Activated CD8-positive, alpha-beta memory T cell treated with anti-CD3 and anti-CD28 coated beads, Interleukin-2, amount 10 ng/mL, durations not matched to agents 7 days and 5 days (primary cell): ENCODE measurements at regions of chr14 and their contacts with region 1.

Region 1: DNA sequence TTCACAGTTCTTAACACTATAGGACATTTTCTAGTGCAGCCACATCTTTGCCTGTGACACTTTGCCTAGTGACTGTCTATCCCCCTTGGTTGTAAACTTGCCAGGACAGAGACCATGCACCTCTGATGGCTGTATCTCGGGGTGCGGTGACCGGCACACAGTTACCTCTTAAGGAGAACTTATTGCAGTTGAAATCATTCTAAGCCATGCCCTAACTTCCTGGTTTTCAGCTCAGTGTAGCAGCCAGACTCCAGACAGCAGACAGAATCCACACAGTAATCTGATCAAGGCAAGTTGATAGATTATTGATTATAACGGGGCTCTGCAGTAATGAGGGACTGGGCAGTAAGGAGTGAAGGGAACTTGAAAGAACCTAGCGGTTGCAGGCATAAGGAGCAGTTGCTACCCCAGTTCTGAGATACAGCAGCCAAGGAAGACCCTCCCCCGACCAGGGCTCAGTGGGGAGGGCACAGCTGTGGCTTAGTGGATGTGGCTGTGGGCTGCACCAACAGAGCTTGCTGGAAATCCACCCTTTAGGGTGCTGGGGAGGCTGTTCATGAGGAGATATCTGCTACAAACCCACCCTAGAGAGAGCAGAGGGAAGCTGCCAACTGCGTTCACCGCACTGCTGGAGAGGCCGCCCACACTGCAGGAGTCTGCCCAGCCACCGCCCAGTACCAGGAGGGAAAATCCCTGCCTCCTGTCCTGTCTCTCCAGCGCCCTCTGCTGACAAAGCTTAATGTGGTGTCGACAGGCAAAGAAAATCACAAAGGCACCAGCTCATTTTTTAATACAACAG is 58.2 kb upstream of the BEGAIN start:
- DNase-seq: peak; percentile 94
- ATAC-seq: peak; percentile 82
- H3K4me3 Mint-ChIP-seq: peak overlapping the region; percentile 20
- H3K27ac Mint-ChIP-seq: peak overlapping the region; percentile 83
- H3K4me1 Mint-ChIP-seq: peaks cover 64% of the 10 kb centered on the region
- H3K27me3 Mint-ChIP-seq: peaks cover 9% of the 10 kb centered on the region

Region 2: DNA sequence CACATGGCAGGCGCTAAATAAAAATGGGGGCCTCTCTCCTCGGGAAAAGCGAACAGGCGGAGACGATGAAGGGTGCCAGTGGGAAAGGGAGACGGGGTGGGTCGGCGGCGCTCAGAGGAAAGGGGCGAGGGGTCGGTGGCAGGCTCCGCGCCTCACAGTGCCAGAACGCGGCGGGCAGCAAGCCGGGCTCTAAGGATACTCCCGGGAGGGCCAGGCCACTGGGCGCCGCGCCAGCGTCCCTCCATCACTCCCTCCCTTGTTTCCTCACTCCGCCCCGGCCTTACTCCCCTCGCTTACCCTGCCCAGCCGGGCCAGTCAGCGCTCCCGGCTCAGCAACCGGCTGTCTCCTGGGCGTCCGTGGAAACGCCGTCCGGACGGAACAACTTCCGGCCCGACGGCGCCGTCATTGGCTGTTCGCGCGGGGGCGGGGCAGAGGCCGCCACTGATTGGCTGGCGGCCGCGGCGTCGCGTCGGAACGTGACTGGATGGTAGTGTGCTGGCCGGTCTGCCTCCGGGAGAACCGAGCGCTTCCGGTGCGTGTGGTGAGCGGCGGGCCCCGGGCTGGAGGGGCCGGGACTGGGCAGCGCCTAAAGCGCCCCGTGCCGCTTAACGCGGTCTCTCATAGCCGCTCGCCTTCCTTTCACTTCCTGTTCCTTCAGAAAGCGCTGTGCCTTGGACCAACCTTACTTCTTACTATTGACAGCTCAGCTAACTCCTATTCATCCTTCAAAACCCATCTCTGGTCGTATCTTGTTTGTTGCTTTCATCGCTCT is 269.2 kb before region 1 on chr14:
- CTCF ChIA-PET with region 1: interaction called, 177 read pairs
- DNase-seq: peak; percentile 95
- ATAC-seq: peak; percentile 84
- H3K4me3 Mint-ChIP-seq: peak within 1 kb of the TSS; percentile 85
- H3K27ac Mint-ChIP-seq: peak within 1 kb of the TSS; percentile 92
- H3K4me1 Mint-ChIP-seq: peaks cover 49% of the 10 kb centered on the region
- H3K27me3 Mint-ChIP-seq: no peaks in the 10 kb centered on the region

Region 3: DNA sequence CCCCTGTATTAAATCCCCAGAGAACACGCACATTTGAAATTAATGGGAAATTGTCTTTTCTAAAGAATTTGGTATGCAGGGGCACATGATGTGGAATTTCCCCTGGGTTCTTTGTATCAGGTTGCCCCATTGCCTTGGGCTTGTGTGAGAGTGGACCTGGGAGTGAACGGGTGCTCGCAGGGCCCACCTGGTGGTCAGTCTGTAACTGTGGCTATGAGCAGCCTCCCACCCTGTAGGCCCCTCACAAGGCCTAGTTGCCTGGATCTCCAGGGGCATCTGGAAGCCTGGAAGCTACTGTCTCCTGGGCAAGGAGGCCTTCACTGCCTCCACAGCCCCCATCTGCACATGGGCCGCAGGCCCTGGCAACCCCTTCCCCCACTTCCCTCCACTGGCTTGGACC is 225.5 kb before region 1 on chr14:
- CTCF ChIA-PET with region 1: interaction called, 10 read pairs
- DNase-seq: no peak
- ATAC-seq: no peak
- H3K4me3 Mint-ChIP-seq: no peak overlapping the region
- H3K27ac Mint-ChIP-seq: no peak overlapping the region
- H3K4me1 Mint-ChIP-seq: peaks cover 4% of the 10 kb centered on the region
- H3K27me3 Mint-ChIP-seq: no peaks in the 10 kb centered on the region

Region 4: DNA sequence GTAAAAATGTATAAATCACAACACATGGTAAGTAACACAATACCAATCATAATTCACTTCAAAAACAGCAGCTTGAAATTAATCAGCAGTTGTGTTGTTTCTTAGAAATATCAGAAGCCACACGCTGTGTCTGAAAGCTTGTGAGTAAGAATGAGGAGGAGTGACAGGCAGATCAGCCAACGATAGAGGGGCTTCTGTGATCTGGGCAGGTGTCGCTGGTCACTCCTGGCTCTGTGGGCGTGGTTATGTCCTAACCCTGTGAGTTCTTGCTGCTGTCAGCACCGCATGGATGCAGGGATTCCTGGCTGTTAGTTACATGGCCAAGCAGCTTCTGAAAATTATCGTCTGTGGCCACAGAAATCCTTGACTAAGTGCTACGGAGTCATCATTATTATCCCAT is 198.8 kb before region 1 on chr14:
- CTCF ChIA-PET with region 1: interaction called, 45 read pairs
- DNase-seq: peak; percentile 56
- ATAC-seq: peak; percentile 75
- H3K4me3 Mint-ChIP-seq: no peak overlapping the region
- H3K27ac Mint-ChIP-seq: no peak overlapping the region
- H3K4me1 Mint-ChIP-seq: peaks cover 23% of the 10 kb centered on the region
- H3K27me3 Mint-ChIP-seq: no peaks in the 10 kb centered on the region

Region 5: DNA sequence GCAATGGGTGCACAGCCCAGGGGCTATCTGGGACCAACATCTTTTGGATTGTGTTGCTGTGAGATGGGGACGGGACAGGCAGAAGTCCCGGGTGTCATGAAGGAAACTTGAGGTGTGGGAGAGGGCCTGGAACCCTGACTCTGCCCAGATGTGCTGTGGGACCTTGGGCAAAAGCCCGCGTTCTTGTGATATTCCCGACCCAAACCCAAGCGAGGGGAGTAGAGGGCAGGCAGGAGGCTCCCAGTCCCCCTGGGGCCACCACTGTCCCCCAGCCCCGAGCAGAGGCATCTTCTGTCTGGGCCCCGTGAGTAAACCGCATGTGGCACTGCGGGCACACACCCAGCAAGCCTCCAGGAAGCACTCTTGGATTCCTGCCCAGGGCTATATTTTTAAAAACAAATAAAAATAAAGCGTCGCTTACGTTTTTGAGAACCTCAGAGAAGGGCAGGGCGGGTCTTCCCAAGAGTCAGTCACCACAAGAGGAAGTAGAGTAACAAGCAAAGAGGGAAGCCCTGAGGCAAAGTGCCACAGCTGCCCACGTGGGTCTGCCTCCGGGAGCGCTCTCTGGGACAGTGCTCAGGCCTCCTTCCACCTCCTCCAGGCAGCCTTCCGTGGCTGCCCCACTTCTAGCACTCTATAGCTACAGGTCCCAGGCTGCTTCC is 97.6 kb before region 1 on chr14:
- CTCF ChIA-PET with region 1: interaction called, 50 read pairs
- DNase-seq: peak; percentile 64
- ATAC-seq: peak; percentile 22
- H3K4me3 Mint-ChIP-seq: peak overlapping the region; percentile 20
- H3K27ac Mint-ChIP-seq: peak overlapping the region; percentile 84
- H3K4me1 Mint-ChIP-seq: peaks cover 35% of the 10 kb centered on the region
- H3K27me3 Mint-ChIP-seq: no peaks in the 10 kb centered on the region

Region 6: GRCh38 chr14:100626614-100627013 is 18.8 kb before region 1 on chr14:
- CTCF ChIA-PET with region 1: interaction called, 11 read pairs
- DNase-seq: no peak
- ATAC-seq: no peak
- H3K4me3 Mint-ChIP-seq: no peak overlapping the region
- H3K27ac Mint-ChIP-seq: no peak overlapping the region
- H3K4me1 Mint-ChIP-seq: peaks cover 7% of the 10 kb centered on the region
- H3K27me3 Mint-ChIP-seq: peaks cover 45% of the 10 kb centered on the region

Region 7: DNA sequence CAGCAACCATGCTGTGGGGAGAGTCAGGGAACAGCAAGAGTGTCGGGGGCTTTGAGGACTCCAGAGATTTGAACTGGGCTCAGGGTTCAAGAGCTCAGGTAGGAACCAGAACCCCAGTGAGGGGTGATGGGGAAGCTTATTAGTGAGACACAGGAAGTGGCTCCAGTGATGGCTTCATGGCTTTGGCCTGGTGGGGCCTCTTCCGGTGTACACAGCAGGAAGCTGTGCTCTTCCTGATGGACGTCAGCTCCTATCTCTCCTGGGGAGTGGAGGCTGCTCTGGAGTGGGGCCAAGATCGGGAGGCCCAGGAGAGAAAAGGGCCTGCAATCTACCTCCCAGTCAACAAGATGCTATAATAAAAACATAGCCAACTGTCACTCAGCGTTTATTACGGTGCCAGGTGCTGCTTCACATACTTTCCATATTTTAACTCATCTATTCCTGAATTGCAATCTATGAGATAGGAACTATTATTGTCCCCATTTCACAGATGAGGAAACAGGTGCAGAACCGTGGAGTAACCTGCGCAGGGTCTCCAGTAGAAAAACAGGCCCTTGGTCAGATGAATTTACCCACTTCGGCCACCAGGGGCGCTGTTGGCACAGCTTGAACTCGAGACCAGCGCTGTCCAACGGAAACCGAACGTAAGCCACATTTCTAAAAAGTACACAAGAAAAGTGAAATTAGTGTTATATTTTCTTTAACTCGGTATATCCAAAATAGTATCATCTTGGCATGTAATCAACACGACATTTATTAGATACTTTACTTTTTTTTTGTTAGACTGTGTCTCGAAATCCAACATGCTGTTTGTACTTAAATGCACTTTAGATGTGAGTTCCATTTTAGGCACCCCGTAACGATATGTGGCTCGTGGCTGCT is 17.7 kb after region 1 on chr14:
- CTCF ChIA-PET with region 1: interaction called, 13 read pairs
- DNase-seq: peak; percentile 71
- ATAC-seq: peak; percentile 66
- H3K4me3 Mint-ChIP-seq: no peak overlapping the region
- H3K27ac Mint-ChIP-seq: peak overlapping the region; percentile 30
- H3K4me1 Mint-ChIP-seq: peaks cover 6% of the 10 kb centered on the region
- H3K27me3 Mint-ChIP-seq: peaks cover 4% of the 10 kb centered on the region

Region 8: DNA sequence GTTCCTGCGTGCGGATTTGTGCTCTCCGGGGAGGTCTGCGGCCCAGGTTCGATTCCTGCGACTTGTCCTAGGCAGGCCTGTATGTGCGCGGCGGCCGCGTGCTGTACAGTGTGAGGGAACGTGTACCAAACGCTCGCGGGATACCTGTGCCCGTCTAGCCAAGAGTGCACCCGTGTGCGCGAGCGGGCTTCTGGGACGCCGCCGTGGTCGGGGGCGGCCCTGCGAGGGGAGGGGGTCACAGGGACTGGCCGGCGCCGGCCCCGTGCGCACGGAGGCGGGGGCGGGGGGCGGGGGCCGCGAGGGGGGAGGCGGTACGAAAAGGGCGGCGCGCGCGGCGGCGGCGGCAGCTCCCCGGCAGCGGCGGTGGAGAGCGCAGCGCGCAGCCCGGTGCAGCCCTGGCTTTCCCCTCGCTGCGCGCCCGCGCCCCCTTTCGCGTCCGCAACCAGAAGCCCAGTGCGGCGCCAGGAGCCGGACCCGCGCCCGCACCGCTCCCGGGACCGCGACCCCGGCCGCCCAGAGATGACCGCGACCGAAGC is 81.2 kb after region 1 on chr14 and contains the start of gene DLK1:
- CTCF ChIA-PET with region 1: no interaction called
- DNase-seq: no peak
- ATAC-seq: no peak
- H3K4me3 Mint-ChIP-seq: no peak within 1 kb of the TSS
- H3K27ac Mint-ChIP-seq: no peak within 1 kb of the TSS
- H3K4me1 Mint-ChIP-seq: no peaks in the 10 kb centered on the region
- H3K27me3 Mint-ChIP-seq: peaks cover 37% of the 10 kb centered on the region
- total RNA-seq, gene DLK1: not detected